Activated CD8-positive, alpha-beta T cell treated with anti-CD3 and anti-CD28 coated beads for 36 hours (primary cell): ENCODE measurements at regions of chr2 and their contacts with region 1.

Region 1: GRCh38 chr2:197113275-197113711 is 186.8 kb upstream of the PGAP1 start:
- DNase-seq: no peak
- ATAC-seq: no peak
- H3K4me3 Mint-ChIP-seq: no peak overlapping the region
- H3K27ac Mint-ChIP-seq: peak overlapping the region; percentile 82
- H3K4me1 Mint-ChIP-seq: peaks cover 32% of the 10 kb centered on the region
- H3K27me3 Mint-ChIP-seq: no peaks in the 10 kb centered on the region
- CTCF ChIP-seq: peak; percentile 75

Region 2: DNA sequence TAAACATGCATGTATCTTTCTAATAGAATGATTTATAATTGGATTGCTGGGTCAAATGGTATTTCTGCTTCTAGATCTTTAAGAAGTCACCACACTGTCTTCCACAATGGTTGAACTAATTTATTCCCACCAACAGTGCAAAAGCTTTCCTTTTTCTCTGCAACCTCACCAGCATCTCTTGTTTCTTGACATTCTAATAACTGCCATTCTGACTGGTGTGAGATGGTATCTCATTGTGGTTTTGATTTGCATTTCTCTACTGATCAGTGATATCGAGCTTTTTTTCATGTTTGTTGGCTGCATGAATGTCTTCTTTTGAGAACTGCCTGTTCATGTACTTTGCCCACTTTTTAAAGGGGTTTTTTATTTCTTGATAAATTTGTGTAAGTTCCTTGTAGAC is 14.8 kb after region 1 on chr2:
- CTCF ChIA-PET with region 1: interaction called, 31 read pairs
- POLR2A ChIA-PET with region 1: interaction called, 3 read pairs
- intact Hi-C with region 1: no loop called
- DNase-seq: no peak
- ATAC-seq: no peak
- H3K4me3 Mint-ChIP-seq: no peak overlapping the region
- H3K27ac Mint-ChIP-seq: peak overlapping the region; percentile 75
- H3K4me1 Mint-ChIP-seq: peaks cover 64% of the 10 kb centered on the region
- H3K27me3 Mint-ChIP-seq: no peaks in the 10 kb centered on the region
- CTCF ChIP-seq: no peak

Region 3: GRCh38 chr2:197168705-197169104 is 55.4 kb after region 1 on chr2:
- CTCF ChIA-PET with region 1: interaction called, 81 read pairs
- POLR2A ChIA-PET with region 1: interaction called, 3 read pairs
- intact Hi-C with region 1: loop called (anchors 2 kb)
- DNase-seq: peak; percentile 88
- ATAC-seq: peak; percentile 86
- H3K4me3 Mint-ChIP-seq: no peak overlapping the region
- H3K27ac Mint-ChIP-seq: peak overlapping the region; percentile 71
- H3K4me1 Mint-ChIP-seq: peaks cover 61% of the 10 kb centered on the region
- H3K27me3 Mint-ChIP-seq: no peaks in the 10 kb centered on the region
- CTCF ChIP-seq: peak; percentile 68

Region 4: GRCh38 chr2:197198890-197199289 is 85.6 kb after region 1 on chr2:
- CTCF ChIA-PET with region 1: interaction called, 15 read pairs
- POLR2A ChIA-PET with region 1: interaction called, 3 read pairs
- intact Hi-C with region 1: no loop called
- DNase-seq: peak; percentile 96
- ATAC-seq: peak; percentile 86
- H3K4me3 Mint-ChIP-seq: peak overlapping the region; percentile 78
- H3K27ac Mint-ChIP-seq: peak overlapping the region; percentile 94
- H3K4me1 Mint-ChIP-seq: peaks cover 89% of the 10 kb centered on the region
- H3K27me3 Mint-ChIP-seq: no peaks in the 10 kb centered on the region
- CTCF ChIP-seq: no peak

Region 5: DNA sequence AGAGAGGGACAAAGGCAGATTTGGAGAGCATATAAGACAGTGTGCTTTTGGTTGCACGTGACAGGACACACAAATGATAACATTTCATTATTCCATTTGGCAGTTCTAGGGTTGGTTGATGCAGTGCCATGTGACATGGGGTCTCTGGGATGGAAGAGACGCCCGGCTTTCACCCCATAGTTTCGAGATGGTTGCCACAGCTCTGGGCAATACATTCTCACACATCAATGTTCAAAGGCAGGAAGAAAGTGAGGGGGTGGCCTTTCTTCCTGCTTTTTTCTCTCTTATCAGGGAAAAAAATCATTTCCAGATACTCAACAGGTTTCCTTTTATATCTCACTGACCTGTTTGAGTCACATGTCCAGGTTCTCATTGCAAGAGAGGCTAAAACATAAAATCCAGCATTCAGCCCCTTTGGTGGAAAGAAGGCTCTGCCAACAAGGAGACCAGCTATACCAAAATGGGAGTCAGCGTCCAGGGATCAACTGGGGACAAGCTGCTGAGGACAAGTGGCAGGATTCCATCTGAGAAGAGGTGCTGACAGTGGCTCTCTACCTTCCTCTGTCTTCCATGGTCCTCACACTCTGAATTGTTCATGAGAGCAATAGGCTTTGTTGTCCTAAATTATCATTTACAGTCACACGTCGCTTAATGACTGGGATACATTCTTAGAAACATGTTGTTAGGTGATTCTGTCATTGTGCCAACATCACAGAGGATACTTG is 226.4 kb after region 1 on chr2:
- CTCF ChIA-PET with region 1: interaction called, 14 read pairs
- POLR2A ChIA-PET with region 1: no interaction called
- intact Hi-C with region 1: no loop called
- DNase-seq: no peak
- ATAC-seq: no peak
- H3K4me3 Mint-ChIP-seq: no peak overlapping the region
- H3K27ac Mint-ChIP-seq: peak overlapping the region; percentile 3
- H3K4me1 Mint-ChIP-seq: peaks cover 15% of the 10 kb centered on the region
- H3K27me3 Mint-ChIP-seq: no peaks in the 10 kb centered on the region
- CTCF ChIP-seq: no peak

Region 6: GRCh38 chr2:197383823-197384222 is 270.5 kb after region 1 on chr2:
- CTCF ChIA-PET with region 1: interaction called, 49 read pairs
- POLR2A ChIA-PET with region 1: no interaction called
- intact Hi-C with region 1: loop called (anchors 5 kb)
- DNase-seq: no peak
- ATAC-seq: no peak
- H3K4me3 Mint-ChIP-seq: no peak overlapping the region
- H3K27ac Mint-ChIP-seq: no peak overlapping the region
- H3K4me1 Mint-ChIP-seq: peaks cover 3% of the 10 kb centered on the region
- H3K27me3 Mint-ChIP-seq: no peaks in the 10 kb centered on the region
- CTCF ChIP-seq: no peak

Region 7: DNA sequence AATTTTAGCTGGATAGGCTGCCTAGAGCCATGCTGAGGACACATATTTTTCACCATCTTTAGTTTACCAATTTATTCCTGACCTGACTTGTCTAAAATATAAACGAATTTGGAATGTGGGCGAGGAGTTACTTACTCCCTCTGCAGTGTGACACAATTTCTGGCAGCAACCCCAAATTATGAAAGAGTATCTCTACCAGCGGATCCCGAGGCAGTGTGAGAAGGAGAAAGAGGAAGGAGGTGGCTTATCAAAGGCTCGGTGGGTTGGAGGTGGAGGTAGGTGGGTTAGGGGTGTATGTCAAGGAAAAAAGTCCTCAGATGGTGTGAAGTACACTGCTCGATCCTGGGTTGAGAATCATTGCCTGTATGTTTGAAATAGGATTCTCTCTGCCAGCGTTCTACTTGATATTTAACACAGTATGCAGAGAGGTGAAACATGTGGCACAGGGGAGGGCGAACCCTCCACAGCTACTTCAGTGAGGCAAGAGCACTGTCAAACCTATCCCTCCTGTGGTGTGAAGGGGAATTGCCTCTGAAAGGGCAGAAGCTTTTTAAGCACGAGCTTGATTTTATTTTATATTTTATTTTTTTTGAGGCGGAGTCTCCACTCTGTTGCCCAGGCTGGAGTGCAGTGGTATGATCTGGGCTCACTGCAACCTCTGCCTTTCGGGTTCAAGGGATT is 486.1 kb after region 1 on chr2:
- CTCF ChIA-PET with region 1: no interaction called
- POLR2A ChIA-PET with region 1: no interaction called
- intact Hi-C with region 1: no loop called
- DNase-seq: peak; percentile 54
- ATAC-seq: peak; percentile 96
- H3K4me3 Mint-ChIP-seq: peak overlapping the region; percentile 11
- H3K27ac Mint-ChIP-seq: no peak overlapping the region
- H3K4me1 Mint-ChIP-seq: peaks cover 5% of the 10 kb centered on the region
- H3K27me3 Mint-ChIP-seq: peaks cover 11% of the 10 kb centered on the region
- CTCF ChIP-seq: peak; percentile 37